IMR-90 (cell line): ENCODE measurements at regions of chr12 and their contacts with region 1.

Region 1: GRCh38 chr12:90959538-90960139 is 4.7 kb upstream of the CCER1 start:
- DNase-seq: peak; percentile 58
- ATAC-seq: peak; percentile 95
- H3K4me3 ChIP-seq: no peak overlapping the region
- H3K27ac ChIP-seq: no peak overlapping the region
- H3K4me1 ChIP-seq: no peaks in the 10 kb centered on the region
- H3K27me3 ChIP-seq: no peaks in the 10 kb centered on the region
- CTCF ChIP-seq: peak; percentile 71
- POLR2A ChIP-seq: no peak
- RAD21 ChIP-seq: peak; percentile 59

Region 2: GRCh38 chr12:92649511-92650227 is 1690.0 kb after region 1 on chr12:
- CTCF ChIA-PET with region 1: no interaction called
- POLR2A ChIA-PET with region 1: no interaction called
- dilution Hi-C with region 1: no loop called
- in situ Hi-C with region 1: loop called (anchors 25 kb)
- intact Hi-C with region 1: no loop called
- DNase-seq: peak; percentile 90
- ATAC-seq: peak; percentile 99
- H3K4me3 ChIP-seq: no peak overlapping the region
- H3K27ac ChIP-seq: no peak overlapping the region
- H3K4me1 ChIP-seq: no peaks in the 10 kb centered on the region
- H3K27me3 ChIP-seq: no peaks in the 10 kb centered on the region
- CTCF ChIP-seq: peak; percentile 85
- POLR2A ChIP-seq: no peak
- RAD21 ChIP-seq: peak; percentile 94